CD8-positive, alpha-beta memory T cell (primary cell): ENCODE measurements at regions of chr10 and their contacts with region 1.

Region 1: DNA sequence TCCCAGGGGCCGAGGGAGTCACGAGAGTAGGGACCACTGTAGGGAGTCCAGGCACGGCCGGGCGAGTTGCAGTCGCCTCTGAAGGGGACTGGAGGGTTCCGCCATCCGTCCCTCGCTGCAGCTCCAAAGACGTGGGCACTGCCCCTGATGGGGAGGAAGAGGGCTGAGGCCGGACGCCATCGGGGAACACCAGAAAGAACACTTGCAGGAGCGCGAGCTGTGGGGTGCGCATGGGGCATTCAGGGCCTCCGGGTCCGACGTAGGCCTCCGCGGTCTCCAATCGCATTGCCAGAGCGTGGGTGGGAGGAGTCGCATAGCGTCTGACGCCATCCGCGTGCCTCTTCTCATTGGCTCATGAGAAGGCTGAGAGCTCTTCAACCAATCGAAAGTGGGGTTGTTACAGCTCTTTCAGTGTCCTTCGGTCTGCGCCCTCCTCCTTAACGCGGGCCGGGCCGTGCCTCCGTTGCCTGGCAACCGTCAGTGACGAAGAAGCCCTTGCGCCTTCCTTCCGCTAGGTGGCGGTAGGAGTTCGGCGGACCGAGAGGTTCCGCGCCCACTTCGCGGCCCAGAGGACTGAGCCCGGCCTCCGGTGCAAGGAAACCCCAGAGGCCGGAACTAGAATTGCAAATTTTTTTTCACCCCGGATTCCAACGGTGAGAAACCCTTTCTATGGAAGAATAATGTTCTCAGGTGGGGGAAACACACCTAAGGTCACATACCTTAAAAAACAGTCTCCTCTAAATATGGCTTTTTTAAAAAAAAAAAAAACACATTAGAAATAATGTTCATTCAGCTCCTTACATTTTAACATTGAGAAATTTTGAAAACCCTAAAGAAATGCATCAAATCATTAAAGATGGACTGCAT is at the start of gene TCTN3:
- DNase-seq: peak; percentile 90 to 98 (median 96)
- H3K4me3 ChIP-seq: peak within 1 kb of the TSS; percentile 81
- H3K4me3 Mint-ChIP-seq: peak within 1 kb of the TSS; percentile 86 to 98 (median 96)
- H3K27ac ChIP-seq: peak within 1 kb of the TSS; percentile 90
- H3K27ac Mint-ChIP-seq: peak within 1 kb of the TSS; percentile 92 to 99 (median 98)
- H3K4me1 ChIP-seq: peaks cover 22% of the 10 kb centered on the region
- H3K4me1 Mint-ChIP-seq: peaks cover 39 to 54% (median 52%) of the 10 kb centered on the region in 3 donors
- H3K27me3 ChIP-seq: no peaks in the 10 kb centered on the region
- H3K27me3 Mint-ChIP-seq: peaks cover 2 to 6% of the 10 kb centered on the region in 2 donors
- total RNA-seq, gene TCTN3: 32.1 to 32.7 TPM

Region 2: GRCh38 chr10:95661818-95662217 is 32.1 kb before region 1 on chr10:
- CTCF ChIA-PET with region 1: interaction called, 11 read pairs
- POLR2A ChIA-PET with region 1: interaction called, 3 read pairs
- DNase-seq: no peak
- H3K4me3 ChIP-seq: no peak overlapping the region
- H3K4me3 Mint-ChIP-seq: peak overlapping the region in 1 of 7 donors; percentile 28
- H3K27ac ChIP-seq: no peak overlapping the region
- H3K27ac Mint-ChIP-seq: peak overlapping the region in 2 of 8 donors; percentile 11 to 47
- H3K4me1 ChIP-seq: peaks cover 5% of the 10 kb centered on the region
- H3K4me1 Mint-ChIP-seq: peaks cover 2 to 5% (median 4%) of the 10 kb centered on the region in 3 donors
- H3K27me3 ChIP-seq: no peaks in the 10 kb centered on the region
- H3K27me3 Mint-ChIP-seq: no peaks in the 10 kb centered on the region

Region 3: DNA sequence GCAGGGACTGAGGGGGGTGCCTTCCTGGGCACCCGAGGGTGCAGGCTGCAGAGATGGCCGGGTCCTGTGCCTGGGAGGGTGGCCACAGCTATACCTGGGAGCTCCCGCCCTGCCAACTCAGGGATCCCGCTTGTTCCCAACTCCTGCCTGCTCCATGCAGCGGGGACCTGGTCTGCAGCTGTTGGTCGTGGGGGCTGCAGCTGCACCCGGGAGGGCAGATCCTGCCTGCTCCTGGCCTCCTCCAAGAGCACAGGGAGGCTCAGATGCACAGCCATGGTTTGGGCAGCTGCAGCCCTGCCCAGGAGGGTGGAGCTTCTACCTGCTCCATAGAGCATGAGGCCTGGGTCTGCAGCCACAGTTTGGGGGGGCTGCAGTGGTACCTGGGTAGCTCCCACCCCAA is 13.1 kb after region 1 on chr10:
- CTCF ChIA-PET with region 1: interaction called, 12 read pairs
- POLR2A ChIA-PET with region 1: no interaction called
- DNase-seq: no peak
- H3K4me3 ChIP-seq: no peak overlapping the region
- H3K4me3 Mint-ChIP-seq: no peak overlapping the region
- H3K27ac ChIP-seq: no peak overlapping the region
- H3K27ac Mint-ChIP-seq: no peak overlapping the region
- H3K4me1 ChIP-seq: no peaks in the 10 kb centered on the region
- H3K4me1 Mint-ChIP-seq: no peaks in the 10 kb centered on the region
- H3K27me3 ChIP-seq: no peaks in the 10 kb centered on the region
- H3K27me3 Mint-ChIP-seq: no peaks in the 10 kb centered on the region

Region 4: GRCh38 chr10:95841661-95842498 is 148.0 kb after region 1 on chr10:
- CTCF ChIA-PET with region 1: interaction called, 149 read pairs
- POLR2A ChIA-PET with region 1: interaction called, 6 read pairs
- DNase-seq: peak in 4 of 5 donors; percentile 9 to 53 (median 36)
- H3K4me3 ChIP-seq: no peak overlapping the region
- H3K4me3 Mint-ChIP-seq: peak overlapping the region in 2 of 7 donors; percentile 8 to 22
- H3K27ac ChIP-seq: no peak overlapping the region
- H3K27ac Mint-ChIP-seq: peak overlapping the region in 7 of 8 donors; percentile 34 to 86 (median 67)
- H3K4me1 ChIP-seq: peaks cover 7% of the 10 kb centered on the region
- H3K4me1 Mint-ChIP-seq: peaks cover 14 to 16% (median 16%) of the 10 kb centered on the region in 3 donors
- H3K27me3 ChIP-seq: no peaks in the 10 kb centered on the region
- H3K27me3 Mint-ChIP-seq: peaks cover 2 to 10% of the 10 kb centered on the region in 2 donors

Region 5: DNA sequence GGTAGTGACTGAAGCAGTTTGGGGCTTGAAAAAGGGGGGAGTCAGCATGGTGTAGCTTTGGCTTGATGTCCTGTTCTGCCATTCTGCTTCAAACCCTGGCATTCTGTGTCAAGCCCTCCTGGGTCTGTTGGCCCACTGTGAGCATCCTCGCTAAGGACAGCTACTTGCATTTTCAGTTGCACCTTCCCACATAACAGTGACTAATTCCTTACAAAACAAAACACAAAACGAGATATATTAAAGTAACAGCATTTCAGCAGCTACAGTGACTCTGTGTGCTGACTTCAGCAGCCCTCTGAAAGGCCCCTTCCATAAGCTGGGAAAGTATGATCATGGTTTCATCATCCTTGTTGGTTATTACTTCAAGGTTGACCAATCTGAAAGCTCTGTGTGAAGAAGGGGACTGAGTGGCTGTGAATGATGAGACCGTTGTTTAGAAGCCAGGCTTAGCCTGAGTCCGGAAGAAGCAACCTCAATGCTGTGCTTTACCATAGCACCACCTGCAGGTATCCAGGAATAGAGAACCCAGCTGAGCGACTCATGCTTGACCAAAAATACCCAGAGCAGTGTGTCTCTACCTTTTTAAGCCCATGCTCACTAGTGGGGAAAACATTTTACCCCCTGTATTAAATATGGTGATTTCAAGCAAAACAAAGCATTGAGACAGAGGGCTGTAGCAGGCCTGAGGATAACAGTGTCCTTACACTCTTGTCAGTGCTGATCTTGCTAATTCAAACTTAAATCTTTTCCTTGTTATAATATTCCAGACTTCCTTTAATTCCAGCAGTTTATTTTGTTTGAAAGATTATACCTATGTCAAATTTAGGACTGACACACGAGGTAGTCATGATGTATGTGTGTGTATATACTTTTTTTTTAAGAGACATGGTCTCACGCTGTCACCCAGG is 171.3 kb after region 1 on chr10:
- CTCF ChIA-PET with region 1: interaction called, 37 read pairs
- POLR2A ChIA-PET with region 1: interaction called, 8 read pairs
- DNase-seq: peak in 3 of 5 donors; percentile 13 to 59 (median 29)
- H3K4me3 ChIP-seq: no peak overlapping the region
- H3K4me3 Mint-ChIP-seq: no peak overlapping the region
- H3K27ac ChIP-seq: no peak overlapping the region
- H3K27ac Mint-ChIP-seq: peak overlapping the region in 4 of 8 donors; percentile 56 to 83 (median 74)
- H3K4me1 ChIP-seq: no peaks in the 10 kb centered on the region
- H3K4me1 Mint-ChIP-seq: peaks cover 0 to 10% (median 4%) of the 10 kb centered on the region in 3 donors
- H3K27me3 ChIP-seq: no peaks in the 10 kb centered on the region
- H3K27me3 Mint-ChIP-seq: no peaks in the 10 kb centered on the region

Region 6: GRCh38 chr10:96129387-96130325 is 435.8 kb after region 1 on chr10 and contains the start of gene ZNF518A:
- CTCF ChIA-PET with region 1: interaction called, 8 read pairs
- POLR2A ChIA-PET with region 1: interaction called, 11 read pairs
- DNase-seq: peak; percentile 79 to 94 (median 92)
- H3K4me3 ChIP-seq: peak within 1 kb of the TSS; percentile 80
- H3K4me3 Mint-ChIP-seq: peak within 1 kb of the TSS; percentile 84 to 99 (median 95)
- H3K27ac ChIP-seq: peak within 1 kb of the TSS; percentile 95
- H3K27ac Mint-ChIP-seq: peak within 1 kb of the TSS; percentile 97 to 99 (median 99)
- H3K4me1 ChIP-seq: peaks cover 16% of the 10 kb centered on the region
- H3K4me1 Mint-ChIP-seq: peaks cover 22 to 33% (median 28%) of the 10 kb centered on the region in 3 donors
- H3K27me3 ChIP-seq: peaks cover 16% of the 10 kb centered on the region
- H3K27me3 Mint-ChIP-seq: peaks cover 35 to 39% of the 10 kb centered on the region in 2 donors
- total RNA-seq, gene ZNF518A: 15.0 to 15.7 TPM